T-cell (primary cell): ENCODE measurements at regions of chr1 and their contacts with region 1.

Region 1: GRCh38 chr1:111769517-111770146 is 13.9 kb downstream of the DDX20 start:
- DNase-seq: peak in 31 of 35 experiments; percentile 9 to 84 (median 45)
- ATAC-seq: peak; percentile 32 to 69 (median 50)
- H3K4me3 ChIP-seq: no peak overlapping the region
- H3K4me3 Mint-ChIP-seq: no peak overlapping the region
- H3K27ac ChIP-seq: no peak overlapping the region
- H3K27ac Mint-ChIP-seq: peak overlapping the region in 1 of 2 donors; percentile 16
- H3K4me1 ChIP-seq: no peaks in the 10 kb centered on the region
- H3K4me1 Mint-ChIP-seq: peaks cover 0 to 8% (median 2%) of the 10 kb centered on the region in 3 donors
- H3K27me3 ChIP-seq: no peaks in the 10 kb centered on the region
- H3K27me3 Mint-ChIP-seq: no peaks in the 10 kb centered on the region

Region 2: DNA sequence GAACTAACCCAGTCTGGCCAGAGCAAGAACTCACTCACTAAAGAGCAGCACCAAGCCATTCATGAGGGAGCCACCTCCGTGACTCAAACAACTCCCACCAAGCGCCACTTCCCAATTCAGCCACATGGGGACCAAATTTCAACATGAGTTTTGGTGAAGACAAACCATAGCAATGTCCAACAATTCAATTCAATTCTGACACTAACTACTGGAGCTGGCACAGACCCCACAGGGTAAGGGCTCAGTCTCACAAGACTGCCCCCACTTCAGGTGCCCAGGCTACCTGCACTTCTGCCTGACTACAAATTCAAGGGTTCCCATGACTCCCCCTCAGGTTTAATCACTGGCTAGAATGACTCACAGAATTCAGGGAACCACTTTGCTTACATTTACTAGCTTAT is 198.9 kb before region 1 on chr1:
- CTCF ChIA-PET with region 1: no interaction called
- POLR2A ChIA-PET with region 1: no interaction called
- DNase-seq: peak in 34 of 35 experiments; percentile 2 to 61 (median 30)
- ATAC-seq: peak in 3 of 4 experiments; percentile 47 to 65 (median 60)
- H3K4me3 ChIP-seq: no peak overlapping the region
- H3K4me3 Mint-ChIP-seq: no peak overlapping the region
- H3K27ac ChIP-seq: no peak overlapping the region
- H3K27ac Mint-ChIP-seq: no peak overlapping the region
- H3K4me1 ChIP-seq: peaks cover 0 to 6% of the 10 kb centered on the region in 2 experiments
- H3K4me1 Mint-ChIP-seq: peaks cover 9 to 14% (median 9%) of the 10 kb centered on the region in 3 donors
- H3K27me3 ChIP-seq: no peaks in the 10 kb centered on the region
- H3K27me3 Mint-ChIP-seq: no peaks in the 10 kb centered on the region

Region 3: DNA sequence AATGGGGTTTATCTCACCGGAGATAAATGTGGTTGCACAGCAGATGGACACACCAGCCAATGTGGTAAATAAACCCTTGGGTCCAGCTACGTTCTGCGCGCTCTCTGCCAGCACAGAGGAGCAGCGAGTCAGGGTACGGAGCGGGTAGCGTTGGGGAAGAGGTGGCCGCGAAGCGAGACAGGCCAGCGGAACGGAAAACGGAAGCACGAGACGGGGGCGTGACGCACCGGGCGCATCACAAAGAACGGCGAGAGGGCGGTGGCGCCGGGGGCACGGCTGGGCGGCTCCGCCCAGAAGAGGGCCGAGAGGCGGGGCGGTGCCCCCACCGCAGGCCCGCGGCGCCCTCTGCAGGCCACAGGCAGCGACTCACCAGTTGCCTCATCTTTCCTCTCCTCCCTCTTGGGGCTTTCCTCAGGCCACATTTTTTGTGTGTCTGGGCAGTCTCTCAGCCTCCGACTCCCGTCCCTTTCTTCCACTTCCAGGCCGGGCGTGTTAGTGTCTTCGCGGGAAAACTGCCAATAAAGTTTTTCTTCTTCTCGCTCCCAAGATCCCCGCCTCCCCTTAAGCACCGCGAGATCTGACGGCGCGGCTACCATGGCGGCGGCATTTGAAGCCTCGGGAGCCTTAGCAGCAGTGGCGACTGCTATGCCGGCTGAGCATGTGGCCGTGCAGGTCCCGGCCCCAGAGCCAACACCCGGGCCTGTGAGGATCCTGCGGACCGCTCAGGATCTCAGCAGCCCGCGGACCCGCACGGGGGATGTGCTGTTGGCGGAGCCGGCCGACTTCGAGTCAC is 14.1 kb before region 1 on chr1 and contains the start of gene DDX20:
- CTCF ChIA-PET with region 1: interaction called, 4 to 21 read pairs
- POLR2A ChIA-PET with region 1: no interaction called
- DNase-seq: peak; percentile 85 to 97 (median 92)
- ATAC-seq: peak; percentile 90 to 96 (median 92)
- H3K4me3 ChIP-seq: peak within 1 kb of the TSS; percentile 82 to 91
- H3K4me3 Mint-ChIP-seq: peak within 1 kb of the TSS; percentile 91 to 97 (median 95)
- H3K27ac ChIP-seq: peak within 1 kb of the TSS; percentile 89
- H3K27ac Mint-ChIP-seq: peak within 1 kb of the TSS; percentile 98 to 99
- H3K4me1 ChIP-seq: peaks cover 13 to 18% of the 10 kb centered on the region in 2 experiments
- H3K4me1 Mint-ChIP-seq: peaks cover 43 to 55% (median 51%) of the 10 kb centered on the region in 3 donors
- H3K27me3 ChIP-seq: no peaks in the 10 kb centered on the region
- H3K27me3 Mint-ChIP-seq: no peaks in the 10 kb centered on the region
- total RNA-seq, gene DDX20: 16.7 to 19.8 (median 17.5) TPM

Region 4: GRCh38 chr1:112021263-112021975 is 251.8 kb after region 1 on chr1:
- CTCF ChIA-PET with region 1: no interaction called
- POLR2A ChIA-PET with region 1: no interaction called
- DNase-seq: no peak
- ATAC-seq: no peak
- H3K4me3 ChIP-seq: no peak overlapping the region
- H3K4me3 Mint-ChIP-seq: no peak overlapping the region
- H3K27ac ChIP-seq: no peak overlapping the region
- H3K27ac Mint-ChIP-seq: no peak overlapping the region
- H3K4me1 ChIP-seq: no peaks in the 10 kb centered on the region
- H3K4me1 Mint-ChIP-seq: no peaks in the 10 kb centered on the region
- H3K27me3 ChIP-seq: peaks cover 6 to 10% of the 10 kb centered on the region in 2 experiments
- H3K27me3 Mint-ChIP-seq: peaks cover 21 to 33% of the 10 kb centered on the region in 2 donors